ENCODE measurements at regions of chr2 and their contacts with region 1.

Region 1: GRCh38 chr2:112275306-112275886 is at the start of gene ZC3H6:
- DNase-seq: peak; percentile 99
- H3K4me3 Mint-ChIP-seq: peak within 1 kb of the TSS; percentile 91
- H3K27ac Mint-ChIP-seq: peak within 1 kb of the TSS; percentile 97
- H3K4me1 Mint-ChIP-seq: peaks cover 13% of the 10 kb centered on the region
- H3K27me3 Mint-ChIP-seq: peaks cover 2% of the 10 kb centered on the region
- total RNA-seq, gene ZC3H6: 3.3 and 4.3 TPM in 2 replicates

Region 2: GRCh38 chr2:112121682-112122254 is 153.6 kb before region 1 on chr2:
- intact Hi-C with region 1: loop called (anchors 1 kb)
- DNase-seq: peak; percentile 30
- H3K4me3 Mint-ChIP-seq: no peak overlapping the region
- H3K27ac Mint-ChIP-seq: no peak overlapping the region
- H3K4me1 Mint-ChIP-seq: no peaks in the 10 kb centered on the region
- H3K27me3 Mint-ChIP-seq: no peaks in the 10 kb centered on the region

Region 3: GRCh38 chr2:112254466-112255239 is 20.7 kb before region 1 on chr2 and contains the start of gene ZC3H8:
- intact Hi-C with region 1: loop called (anchors 1 kb)
- DNase-seq: peak; percentile 96
- H3K4me3 Mint-ChIP-seq: peak within 1 kb of the TSS; percentile 50
- H3K27ac Mint-ChIP-seq: peak within 1 kb of the TSS; percentile 91
- H3K4me1 Mint-ChIP-seq: peaks cover 27% of the 10 kb centered on the region
- H3K27me3 Mint-ChIP-seq: no peaks in the 10 kb centered on the region
- total RNA-seq, gene ZC3H8: 32.9 and 37.4 TPM in 2 replicates

Region 4: GRCh38 chr2:112259509-112260294 is 15.7 kb before region 1 on chr2:
- intact Hi-C with region 1: loop called (anchors 1 kb)
- DNase-seq: peak; percentile 74
- H3K4me3 Mint-ChIP-seq: peak overlapping the region; percentile 43
- H3K27ac Mint-ChIP-seq: no peak overlapping the region
- H3K4me1 Mint-ChIP-seq: peaks cover 26% of the 10 kb centered on the region
- H3K27me3 Mint-ChIP-seq: peaks cover 8% of the 10 kb centered on the region

Region 5: GRCh38 chr2:112481050-112481527 is 205.7 kb after region 1 on chr2:
- intact Hi-C with region 1: loop called (anchors 2 kb)
- DNase-seq: peak; percentile 79
- H3K4me3 Mint-ChIP-seq: peak overlapping the region; percentile 87
- H3K27ac Mint-ChIP-seq: peak overlapping the region; percentile 96
- H3K4me1 Mint-ChIP-seq: peaks cover 40% of the 10 kb centered on the region
- H3K27me3 Mint-ChIP-seq: peaks cover 4% of the 10 kb centered on the region

Measured in activated T-helper 1 cell treated with anti-CD3 and anti-CD28 coated beads, Interleukin-12 subunit alpha, Interleukin-12 subunit beta, Interleukin-2, Interleukin-4 antibody, amounts not matched to agents 30 ng/mL and 10 ng/mL and 1 ng/mL, durations not matched to agents 14 hours and 24 hours and 36 hours (primary cell).